Activated naive CD4-positive, alpha-beta T cell treated with anti-CD3 and anti-CD28 coated beads, Interleukin-2, amount 10 ng/mL, durations not matched to agents 7 days and 5 days (primary cell): ENCODE measurements at regions of chr11 and their contacts with region 1.

Region 1: DNA sequence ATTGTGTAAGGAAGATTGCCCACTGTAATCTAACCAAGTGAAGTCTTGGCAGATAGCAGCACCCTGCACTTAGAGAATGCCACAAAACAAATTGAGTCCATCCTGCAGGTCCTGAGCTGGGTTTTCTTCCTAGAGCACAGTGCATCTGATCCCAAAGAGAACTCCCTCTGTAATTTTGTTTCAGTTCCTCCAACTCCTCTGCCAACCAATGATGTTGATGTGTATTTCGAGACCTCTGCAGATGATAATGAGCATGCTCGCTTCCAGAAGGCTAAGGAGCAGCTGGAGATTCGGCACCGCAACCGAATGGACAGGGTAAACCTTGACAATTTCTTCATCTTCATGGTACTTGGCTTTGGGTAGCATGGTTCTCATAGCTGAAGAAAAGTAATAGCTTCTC is 33.1 kb upstream of the ST14 start:
- DNase-seq: no peak
- H3K4me3 Mint-ChIP-seq: no peak overlapping the region
- H3K27ac Mint-ChIP-seq: no peak overlapping the region
- H3K4me1 Mint-ChIP-seq: peaks cover 15% of the 10 kb centered on the region
- H3K27me3 Mint-ChIP-seq: peaks cover 12% of the 10 kb centered on the region

Region 2: DNA sequence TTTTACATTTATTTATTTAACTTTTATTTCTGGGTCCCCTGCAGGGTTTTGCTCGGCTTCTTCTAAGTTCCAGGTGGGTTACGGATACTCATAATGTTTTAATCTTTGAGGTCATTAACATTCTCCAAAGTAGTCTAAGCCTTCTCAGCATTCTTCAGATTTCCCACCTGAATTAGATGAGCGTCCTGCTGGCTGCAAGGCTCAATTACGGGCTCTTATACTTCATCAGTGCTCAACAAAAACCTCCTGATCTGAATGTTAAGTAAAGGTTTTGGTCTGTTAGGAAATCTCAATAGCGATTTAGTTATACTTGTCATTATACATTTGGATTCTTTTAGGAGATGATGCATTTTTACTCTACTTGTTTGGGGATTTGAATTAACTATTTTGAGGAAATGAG is 203.8 kb before region 1 on chr11:
- CTCF ChIA-PET with region 1: interaction called, 107 read pairs
- DNase-seq: no peak
- H3K4me3 Mint-ChIP-seq: no peak overlapping the region
- H3K27ac Mint-ChIP-seq: peak overlapping the region; percentile 74
- H3K4me1 Mint-ChIP-seq: peaks cover 31% of the 10 kb centered on the region
- H3K27me3 Mint-ChIP-seq: no peaks in the 10 kb centered on the region